GM18951 (cell line): ENCODE measurements at regions of chr3 and their contacts with region 1.

Region 1: DNA sequence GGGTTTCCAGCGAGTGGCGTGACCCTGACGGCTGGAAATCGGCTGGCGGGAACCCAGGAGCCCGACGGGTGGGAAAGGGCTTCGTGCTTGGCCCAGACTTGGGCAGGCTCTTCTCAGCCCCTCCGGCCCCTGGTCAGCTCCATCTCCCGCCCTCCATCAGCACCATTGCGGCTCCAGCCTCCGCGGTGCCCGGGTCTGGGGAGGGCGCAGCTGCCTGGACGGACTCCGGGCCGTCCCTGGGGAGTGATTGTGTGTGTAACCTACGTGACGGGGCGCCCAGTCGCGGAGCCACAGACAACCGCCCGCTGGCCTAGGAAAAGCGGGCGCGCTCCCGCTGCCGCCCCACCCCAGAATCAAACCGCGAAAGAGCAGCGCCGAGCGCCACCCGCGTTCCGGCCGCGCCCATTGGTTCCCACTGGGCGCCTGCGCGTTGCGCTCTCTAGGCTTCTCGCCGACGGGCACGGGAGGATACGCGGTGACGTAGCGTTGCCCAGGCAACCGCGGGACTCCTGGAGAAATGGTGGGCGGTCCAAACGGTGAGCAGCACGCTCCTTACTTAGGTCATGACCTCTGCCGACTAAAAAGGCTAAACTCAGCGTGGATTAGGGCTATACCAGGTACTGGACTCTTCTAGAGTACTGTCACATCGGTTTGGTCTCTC is at the start of gene CFAP20DC:
- POLR2A ChIP-seq: peak; percentile 83

Region 2: DNA sequence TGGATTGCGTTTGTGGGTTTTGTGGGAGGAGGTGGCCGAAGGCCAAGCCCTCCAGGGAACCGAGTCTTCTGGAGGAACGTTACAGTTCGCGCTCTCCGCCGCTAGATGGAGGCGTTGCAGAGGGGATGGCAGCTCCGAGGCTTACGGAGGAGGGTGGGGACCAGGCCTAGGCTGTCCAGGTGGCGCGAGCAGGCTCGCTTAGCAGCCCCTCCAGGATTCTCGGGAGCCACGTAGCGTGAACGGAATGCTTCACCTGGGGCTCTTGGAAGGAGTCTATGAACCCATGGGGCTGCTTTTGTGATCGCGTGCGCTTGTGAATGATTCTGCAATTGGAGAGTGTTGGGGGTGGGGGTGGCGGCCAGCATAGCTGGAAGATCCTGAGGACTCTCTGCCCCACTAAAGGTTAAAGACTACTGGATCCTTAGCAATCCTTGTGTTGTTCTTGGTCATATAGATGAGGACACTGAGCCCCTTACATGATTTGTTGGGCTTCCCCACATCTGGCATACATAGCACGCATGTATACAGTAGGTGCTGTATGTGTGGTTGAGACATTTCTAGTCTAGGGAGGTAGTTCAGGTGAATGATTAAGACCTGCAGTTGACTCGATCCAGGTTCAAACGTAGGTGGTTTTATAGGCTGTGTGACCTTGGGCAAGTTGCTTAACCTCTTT is 409.0 kb before region 1 on chr3:
- in situ Hi-C with region 1: loop called (anchors 25 kb)
- POLR2A ChIP-seq: no peak